ENCODE measurements at regions of chr4 and their contacts with region 1.

Region 1: GRCh38 chr4:13654158-13654797 is 26.8 kb upstream of the BOD1L1 start:
- DNase-seq: no peak
- H3K4me3 ChIP-seq: peak overlapping the region; percentile 72
- CTCF ChIP-seq: peak; percentile 99

Region 2: GRCh38 chr4:13640149-13640940 is 13.9 kb before region 1 on chr4:
- CTCF ChIA-PET with region 1: interaction called, 127 read pairs
- POLR2A ChIA-PET with region 1: no interaction called
- DNase-seq: peak; percentile 56
- H3K4me3 ChIP-seq: no peak overlapping the region
- CTCF ChIP-seq: no peak

Region 3: GRCh38 chr4:13700196-13701140 is 46.2 kb after region 1 on chr4:
- CTCF ChIA-PET with region 1: interaction called, 14 read pairs
- POLR2A ChIA-PET with region 1: no interaction called
- DNase-seq: peak; percentile 82
- H3K4me3 ChIP-seq: no peak overlapping the region
- CTCF ChIP-seq: no peak

Region 4: DNA sequence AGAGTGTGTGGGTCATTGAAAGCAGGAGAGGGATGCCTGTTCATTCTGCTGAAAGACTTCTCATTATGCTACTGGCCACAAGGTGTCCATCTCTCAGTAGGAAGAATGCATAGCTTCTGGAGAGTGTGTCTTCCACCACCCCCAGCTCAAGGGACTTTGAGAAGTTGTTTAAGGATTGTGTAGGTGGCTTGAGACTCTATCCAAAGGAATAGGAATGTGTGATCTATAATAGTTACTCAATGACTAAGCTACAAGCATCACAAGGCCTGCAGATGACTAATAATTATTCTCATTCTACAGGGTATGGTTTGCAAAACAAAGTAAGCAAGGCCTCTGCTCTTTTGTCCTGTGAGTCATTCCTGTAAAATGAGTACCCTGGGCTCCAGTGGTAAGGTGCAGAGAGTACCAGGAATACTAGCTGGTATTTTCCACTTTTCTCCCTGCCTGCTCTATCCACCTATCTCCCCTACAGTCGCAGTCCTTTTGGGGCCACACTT is 253.0 kb after region 1 on chr4:
- CTCF ChIA-PET with region 1: interaction called, 32 read pairs
- POLR2A ChIA-PET with region 1: interaction called, 7 read pairs
- DNase-seq: peak; percentile 98
- H3K4me3 ChIP-seq: no peak overlapping the region
- CTCF ChIP-seq: peak; percentile 59

Region 5: DNA sequence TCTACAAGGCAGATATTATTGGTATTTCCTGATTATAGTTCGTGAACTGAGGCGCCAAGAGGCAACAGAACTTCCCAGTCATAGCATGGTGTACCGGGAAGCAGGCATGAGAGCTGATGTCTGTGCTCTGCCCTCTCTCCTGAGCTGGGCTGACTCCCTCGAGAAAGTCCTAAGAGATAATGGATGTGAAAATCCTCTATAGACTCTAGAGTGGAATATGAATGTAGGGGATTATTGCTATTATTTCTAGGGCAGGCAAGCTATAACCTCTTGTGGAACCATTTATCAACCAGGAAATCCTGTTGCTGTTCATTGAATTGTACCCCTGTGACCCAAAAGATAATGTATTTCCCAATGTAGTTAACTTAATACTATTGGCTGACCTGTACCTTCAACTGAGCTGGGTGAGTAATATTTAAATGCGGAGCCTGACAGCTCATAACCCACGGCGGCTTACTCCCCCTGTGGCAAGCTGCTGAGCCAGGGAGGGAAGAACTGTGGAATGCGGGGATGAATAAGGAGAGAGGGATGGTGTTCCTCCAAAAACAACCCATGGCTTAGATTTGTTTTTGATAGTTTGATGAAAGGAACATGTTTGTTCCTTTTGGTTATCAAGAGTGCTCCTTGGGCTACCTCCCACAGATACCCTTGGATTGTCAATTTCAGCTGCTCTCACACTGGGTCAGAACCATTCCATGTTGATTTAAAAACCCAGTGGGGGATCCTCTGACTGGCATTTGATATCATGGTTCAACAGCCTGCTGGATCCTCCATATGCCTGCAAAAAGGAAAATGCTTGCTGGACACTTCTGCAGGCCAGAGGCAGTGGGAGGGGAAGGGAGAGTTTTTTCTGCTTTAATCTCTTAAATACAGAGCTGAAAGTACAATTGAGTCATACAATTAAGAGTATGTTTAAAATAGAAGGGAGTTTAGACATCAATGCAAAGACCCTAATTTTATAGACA is 312.2 kb after region 1 on chr4:
- CTCF ChIA-PET with region 1: interaction called, 28 read pairs
- POLR2A ChIA-PET with region 1: no interaction called
- DNase-seq: no peak
- H3K4me3 ChIP-seq: no peak overlapping the region
- CTCF ChIP-seq: no peak

Region 6: DNA sequence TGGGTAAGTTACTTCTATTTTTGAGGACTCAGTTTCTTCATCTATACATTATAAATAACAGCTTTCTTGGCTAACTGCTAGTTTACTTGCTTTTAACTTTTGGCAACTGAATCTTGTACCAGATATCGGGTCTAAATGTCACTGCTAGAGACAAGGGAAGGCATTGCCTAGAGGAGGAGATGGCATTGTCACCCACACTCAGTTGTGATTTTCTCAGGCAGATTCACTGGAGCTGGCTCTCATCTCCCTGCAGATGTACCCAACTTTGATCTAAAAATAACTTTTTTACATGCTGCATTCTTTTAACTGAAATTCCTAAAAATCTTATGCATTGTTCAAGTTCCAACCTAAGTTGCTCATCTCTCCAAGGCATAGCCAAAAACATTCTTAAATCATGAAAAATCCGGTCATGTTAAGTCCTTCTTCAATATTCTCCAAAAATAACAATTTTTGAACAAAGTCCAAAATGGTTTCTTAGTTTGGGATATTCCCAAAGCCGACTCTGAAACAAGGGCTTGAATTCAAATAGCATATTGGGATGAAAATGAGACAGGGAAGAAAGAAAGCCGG is 442.2 kb after region 1 on chr4:
- CTCF ChIA-PET with region 1: interaction called, 17 read pairs
- POLR2A ChIA-PET with region 1: no interaction called
- DNase-seq: peak; percentile 76
- H3K4me3 ChIP-seq: no peak overlapping the region
- CTCF ChIP-seq: no peak

Region 7: DNA sequence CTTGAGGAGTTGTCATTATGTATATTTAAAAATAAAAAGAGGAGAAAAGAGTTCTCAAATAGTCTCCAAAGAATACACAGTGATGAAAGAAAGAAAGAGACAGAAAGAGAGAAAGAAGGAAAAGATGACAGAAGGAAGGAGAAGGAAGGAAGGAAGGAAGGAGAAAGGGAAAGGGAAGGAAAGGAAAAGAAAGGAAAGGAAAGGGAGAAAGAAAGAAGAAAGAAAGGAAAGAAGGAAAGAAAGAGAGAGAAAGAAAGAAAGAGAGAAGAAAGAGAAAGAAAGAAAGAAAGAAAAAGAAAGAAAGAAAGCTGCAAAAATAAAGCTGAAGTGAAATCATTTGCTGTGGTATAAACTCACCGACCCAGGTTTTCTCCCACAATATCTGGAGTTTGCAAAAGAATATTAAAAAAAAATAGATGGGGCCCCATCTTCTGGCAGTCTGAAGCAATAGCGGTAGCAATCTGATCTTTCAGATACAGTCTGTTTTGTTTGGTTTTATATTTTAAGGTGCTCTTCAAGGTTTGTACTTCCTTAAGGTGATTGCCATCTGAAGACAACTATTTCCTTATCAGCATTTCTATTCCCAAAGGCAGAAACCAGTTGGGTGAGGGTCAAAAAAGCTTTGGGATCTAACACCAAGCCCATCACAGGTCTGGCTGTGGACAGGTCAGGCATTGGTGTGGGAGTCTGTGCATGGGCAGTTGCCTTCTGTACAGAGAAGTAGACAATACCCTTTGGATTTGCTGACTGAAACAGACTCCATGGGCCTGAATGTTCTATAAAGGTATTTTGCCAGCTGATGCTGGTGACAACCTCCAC is 1508.4 kb after region 1 on chr4:
- CTCF ChIA-PET with region 1: interaction called, 55 read pairs
- POLR2A ChIA-PET with region 1: no interaction called
- DNase-seq: no peak
- H3K4me3 ChIP-seq: no peak overlapping the region
- CTCF ChIP-seq: peak; percentile 6